HEK293 (cell line): ENCODE measurements at regions of chr9 and their contacts with region 1.

Region 1: DNA sequence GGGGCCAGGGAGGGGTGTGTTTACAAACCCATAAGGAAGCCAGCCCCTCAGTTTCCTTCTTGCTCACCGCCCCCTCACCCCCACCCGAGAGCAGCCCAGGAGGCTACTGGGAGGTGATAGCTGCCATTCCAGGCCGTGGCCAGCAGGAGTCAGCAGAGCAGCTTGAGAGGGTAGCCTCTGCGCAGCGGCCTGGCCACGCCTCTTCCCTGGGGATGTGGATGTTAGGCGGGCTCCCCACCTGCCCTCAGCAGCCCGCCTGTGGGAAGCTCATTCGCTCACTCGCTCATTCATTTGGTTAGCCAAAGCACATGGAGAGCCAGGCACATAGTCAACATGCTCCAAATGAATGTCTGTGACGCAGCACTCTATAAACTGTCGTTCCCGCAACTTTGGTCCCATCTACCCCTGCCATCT is 6.1 kb upstream of the DPM2 start:
- H3K4me3 ChIP-seq: no peak overlapping the region
- H3K27ac ChIP-seq: no peak overlapping the region
- H3K4me1 ChIP-seq: peaks cover 3% of the 10 kb centered on the region; the same call in 1 of the 2 replicates
- CTCF ChIP-seq: peak; percentile 70; the same call in 1 of the 2 replicates

Region 2: DNA sequence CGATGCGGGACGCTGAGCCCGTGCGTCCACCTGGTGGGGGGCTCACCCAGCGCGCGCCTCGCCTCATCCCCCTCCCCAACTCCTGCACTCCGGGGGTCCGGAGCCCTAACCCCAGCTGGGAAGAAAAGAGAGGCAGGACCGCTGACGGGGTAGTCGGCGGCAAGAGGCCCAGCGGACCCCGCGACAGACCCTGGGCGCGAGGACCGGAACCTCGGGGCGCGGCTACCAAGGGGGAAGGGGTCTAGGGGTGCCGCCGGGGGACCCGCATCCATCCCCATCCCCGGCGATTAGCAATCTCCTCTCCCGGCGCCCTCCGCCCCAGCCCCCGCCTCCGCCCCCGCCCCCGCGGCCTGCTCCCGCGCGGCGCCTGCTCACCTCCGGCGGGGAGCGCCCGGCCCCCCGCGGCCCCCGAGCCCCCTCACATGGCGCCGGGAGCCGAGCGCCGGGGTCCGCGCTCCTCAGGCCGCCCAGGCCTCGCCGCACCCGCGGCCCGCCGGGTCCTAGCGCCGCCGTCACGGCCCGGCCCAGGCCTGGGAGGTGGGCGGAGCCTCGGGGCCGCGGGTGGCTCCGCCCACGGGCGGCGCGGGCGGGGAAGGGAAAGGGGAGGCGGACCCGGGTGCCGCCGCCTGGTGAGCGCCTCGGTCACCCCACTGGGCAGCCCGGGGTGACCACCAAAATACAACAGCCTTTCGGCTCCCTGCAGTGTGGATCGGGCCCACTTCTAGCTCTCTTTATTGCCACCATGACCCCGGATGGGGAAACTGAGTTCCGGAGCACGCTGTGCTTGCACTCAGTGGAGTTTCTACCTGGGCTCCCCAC is 44.4 kb before region 1 on chr9 and contains the start of gene ST6GALNAC6:
- CTCF ChIA-PET with region 1: no interaction called
- POLR2A ChIA-PET with region 1: no interaction called
- H3K4me3 ChIP-seq: peak within 1 kb of the TSS; percentile 86
- H3K27ac ChIP-seq: peak within 1 kb of the TSS; percentile 78; the same call in 1 of the 2 replicates
- H3K4me1 ChIP-seq: no peaks in the 10 kb centered on the region
- CTCF ChIP-seq: no peak

Region 3: DNA sequence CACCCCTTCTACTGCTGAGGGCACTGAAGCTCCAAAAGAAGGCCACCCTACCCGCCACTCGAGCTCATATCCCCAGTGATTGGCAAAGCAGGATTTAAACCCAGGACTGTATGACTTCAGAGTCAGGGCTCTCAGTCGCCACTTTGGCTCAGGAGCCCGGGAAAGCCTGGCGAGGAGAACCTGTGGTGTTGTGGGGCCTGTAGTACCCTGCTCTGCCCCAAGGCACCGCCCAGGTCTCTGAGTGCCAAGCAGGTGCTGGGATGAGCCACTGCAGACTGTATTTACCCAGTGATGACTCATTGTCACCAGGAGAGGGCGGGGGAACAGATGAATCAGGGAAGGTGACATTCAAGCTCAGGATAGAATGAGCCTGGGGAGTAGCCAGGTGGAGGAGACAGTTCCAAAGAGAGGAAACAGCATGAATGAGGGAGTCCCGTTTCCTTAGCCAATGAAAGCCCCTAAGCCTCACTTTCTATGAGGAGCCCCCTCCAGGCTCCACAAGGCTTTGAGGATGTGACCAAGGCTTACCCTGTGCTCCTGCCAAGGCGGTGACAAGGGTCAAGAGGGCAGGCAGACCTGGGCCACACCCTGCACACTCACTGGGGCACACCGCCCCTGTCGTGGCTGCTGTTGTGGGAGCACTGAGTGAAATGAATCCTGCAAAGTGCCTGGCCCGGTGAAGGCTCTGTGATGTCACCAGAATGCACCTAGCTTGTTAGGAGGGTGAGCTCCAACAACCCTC is 11.7 kb after region 1 on chr9:
- CTCF ChIA-PET with region 1: interaction called, 135 read pairs
- POLR2A ChIA-PET with region 1: interaction called, 5 read pairs
- H3K4me3 ChIP-seq: no peak overlapping the region
- H3K27ac ChIP-seq: no peak overlapping the region; the same call in 1 of the 2 replicates
- H3K4me1 ChIP-seq: peaks cover 8% of the 10 kb centered on the region
- CTCF ChIP-seq: peak; percentile 58

Region 4: GRCh38 chr9:127980706-127981558 is 37.2 kb after region 1 on chr9 and contains the start of gene EEIG1:
- CTCF ChIA-PET with region 1: interaction called, 94 read pairs
- POLR2A ChIA-PET with region 1: interaction called, 12 read pairs
- H3K4me3 ChIP-seq: peak within 1 kb of the TSS; percentile 66
- H3K27ac ChIP-seq: peak within 1 kb of the TSS; percentile 81
- H3K4me1 ChIP-seq: peaks cover 6% of the 10 kb centered on the region; the same call in 1 of the 2 replicates
- CTCF ChIP-seq: no peak

Region 5: DNA sequence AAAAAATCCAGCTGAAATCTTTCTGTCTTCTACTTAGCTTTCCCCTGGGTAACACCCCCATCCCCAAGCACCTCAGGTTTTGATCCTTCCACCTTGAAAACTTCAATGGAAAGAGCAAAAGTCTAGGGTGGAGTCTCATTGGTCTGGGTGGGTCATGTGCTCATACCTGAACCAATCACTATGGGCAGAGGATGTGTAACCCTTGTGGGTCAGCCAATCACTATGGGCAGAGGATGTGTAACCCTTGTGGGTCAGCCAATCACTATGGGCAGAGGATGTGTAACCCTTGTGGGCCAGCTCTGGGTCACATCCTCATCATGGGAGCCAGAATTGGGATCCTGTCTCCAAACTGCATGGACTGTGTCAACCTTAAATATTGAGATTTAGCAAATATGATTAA is 104.9 kb after region 1 on chr9:
- CTCF ChIA-PET with region 1: interaction called, 36 read pairs
- POLR2A ChIA-PET with region 1: no interaction called
- H3K4me3 ChIP-seq: no peak overlapping the region
- H3K27ac ChIP-seq: no peak overlapping the region
- H3K4me1 ChIP-seq: no peaks in the 10 kb centered on the region
- CTCF ChIP-seq: no peak

Region 6: GRCh38 chr9:128081056-128081455 is 137.3 kb after region 1 on chr9:
- CTCF ChIA-PET with region 1: interaction called, 12 read pairs
- POLR2A ChIA-PET with region 1: no interaction called
- H3K4me3 ChIP-seq: no peak overlapping the region
- H3K27ac ChIP-seq: no peak overlapping the region
- H3K4me1 ChIP-seq: no peaks in the 10 kb centered on the region
- CTCF ChIP-seq: no peak